GM12878 (cell line): ENCODE measurements at regions of chr2 and their contacts with region 1.

Region 1: GRCh38 chr2:177489719-177490301 is 97.2 kb downstream of the AGPS start:
- DNase-seq: no peak
- ATAC-seq: no peak
- H3K4me3 ChIP-seq: no peak overlapping the region
- H3K27ac ChIP-seq: no peak overlapping the region
- H3K4me1 ChIP-seq: no peaks in the 10 kb centered on the region
- H3K27me3 ChIP-seq: no peaks in the 10 kb centered on the region
- CTCF ChIP-seq: peak; percentile 37 to 49 (median 39); a peak in 5 of 6 replicates
- EP300 ChIP-seq: no peak
- POLR2A ChIP-seq: no peak
- RAD21 ChIP-seq: peak; percentile 65

Region 2: GRCh38 chr2:177056481-177056929 is 433.3 kb before region 1 on chr2:
- CTCF ChIA-PET with region 1: no interaction called
- POLR2A ChIA-PET with region 1: no interaction called
- RAD21 ChIA-PET with region 1: no interaction called
- SMC1A ChIA-PET with region 1: no interaction called
- in situ Hi-C with region 1: no loop called
- intact Hi-C with region 1: no loop called
- DNase-seq: no peak
- ATAC-seq: peak; percentile 61; the same call in 2 of the 3 replicates
- H3K4me3 ChIP-seq: no peak overlapping the region
- H3K27ac ChIP-seq: no peak overlapping the region
- H3K4me1 ChIP-seq: no peaks in the 10 kb centered on the region
- H3K27me3 ChIP-seq: no peaks in the 10 kb centered on the region
- CTCF ChIP-seq: peak in 1 of 3 experiments; percentile 3; a peak in 2 of 6 replicates
- EP300 ChIP-seq: no peak
- POLR2A ChIP-seq: no peak
- RAD21 ChIP-seq: 0 out of 2 replicates have a peak, but pooled peaks have one; percentile 14

Region 3: DNA sequence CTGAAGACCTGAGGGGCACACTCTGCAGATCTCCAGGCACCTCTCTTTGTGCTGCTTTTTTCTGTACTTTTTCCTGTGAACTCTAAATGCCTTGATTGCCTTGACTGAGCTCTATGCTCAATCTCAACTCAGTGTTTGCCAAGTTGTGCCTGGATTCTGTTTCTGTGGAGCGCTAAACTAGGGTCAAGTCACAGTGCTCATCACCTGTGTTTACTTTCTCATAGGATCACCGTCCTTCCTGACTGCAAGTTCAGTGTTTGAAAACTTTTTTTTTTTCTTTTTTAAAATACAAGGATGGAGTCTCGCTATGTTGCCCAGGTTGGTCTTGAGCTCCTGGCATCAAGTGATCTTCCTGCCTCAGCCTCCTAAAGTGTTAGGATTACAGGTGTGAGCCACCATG is 34.6 kb before region 1 on chr2:
- CTCF ChIA-PET with region 1: no interaction called
- POLR2A ChIA-PET with region 1: no interaction called
- RAD21 ChIA-PET with region 1: no interaction called
- SMC1A ChIA-PET with region 1: no interaction called
- in situ Hi-C with region 1: no loop called
- intact Hi-C with region 1: no loop called
- DNase-seq: no peak
- ATAC-seq: no peak
- H3K4me3 ChIP-seq: no peak overlapping the region
- H3K27ac ChIP-seq: no peak overlapping the region
- H3K4me1 ChIP-seq: no peaks in the 10 kb centered on the region
- H3K27me3 ChIP-seq: no peaks in the 10 kb centered on the region
- CTCF ChIP-seq: no peak
- EP300 ChIP-seq: no peak
- POLR2A ChIP-seq: no peak
- RAD21 ChIP-seq: no peak

Region 4: GRCh38 chr2:177506998-177507397 is 17.2 kb after region 1 on chr2:
- CTCF ChIA-PET with region 1: interaction called, 21 read pairs
- POLR2A ChIA-PET with region 1: no interaction called
- RAD21 ChIA-PET with region 1: interaction called, 3 read pairs
- SMC1A ChIA-PET with region 1: interaction called, 5 read pairs
- in situ Hi-C with region 1: no loop called
- intact Hi-C with region 1: no loop called
- DNase-seq: no peak
- ATAC-seq: no peak
- H3K4me3 ChIP-seq: no peak overlapping the region
- H3K27ac ChIP-seq: no peak overlapping the region
- H3K4me1 ChIP-seq: no peaks in the 10 kb centered on the region
- H3K27me3 ChIP-seq: no peaks in the 10 kb centered on the region
- CTCF ChIP-seq: no peak
- EP300 ChIP-seq: no peak
- POLR2A ChIP-seq: no peak
- RAD21 ChIP-seq: no peak

Region 5: DNA sequence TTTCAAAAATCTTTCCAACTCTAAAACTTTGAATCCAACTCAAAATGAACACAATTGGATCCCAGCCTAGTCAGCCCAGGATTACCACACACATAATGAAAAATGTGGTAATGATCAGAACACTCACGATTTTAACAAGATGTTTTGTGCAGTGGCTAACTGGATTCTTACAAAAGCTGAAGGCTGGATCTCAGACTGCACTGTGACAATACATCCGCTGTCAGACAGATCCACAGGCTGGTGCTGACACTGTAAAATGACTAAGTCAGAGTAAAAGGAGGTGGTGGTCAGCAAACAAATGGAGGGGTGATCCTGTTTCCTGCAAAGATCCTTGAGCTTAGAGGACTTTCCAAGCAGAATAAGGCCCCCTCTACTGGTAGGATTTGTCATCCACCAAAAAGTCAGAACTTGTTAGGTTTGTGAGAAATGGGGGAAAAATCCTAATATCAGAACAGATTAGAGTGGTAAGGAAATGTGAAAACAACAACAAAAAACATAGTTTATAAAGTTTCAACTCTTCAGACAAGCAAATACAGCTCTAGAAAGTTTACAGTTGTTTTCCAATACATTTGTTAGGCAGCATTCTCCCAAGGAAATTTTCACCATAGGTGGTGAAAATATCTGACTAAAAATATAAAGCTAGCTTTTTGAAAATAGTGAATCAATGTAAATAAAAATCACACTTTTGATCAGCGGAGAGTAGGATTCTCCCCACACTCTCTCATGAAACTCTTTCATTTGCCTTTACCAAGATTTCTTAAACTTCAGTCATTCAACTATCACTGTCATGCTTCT is 114.7 kb after region 1 on chr2:
- CTCF ChIA-PET with region 1: interaction called, 18 read pairs
- POLR2A ChIA-PET with region 1: no interaction called
- RAD21 ChIA-PET with region 1: interaction called, 12 read pairs
- SMC1A ChIA-PET with region 1: interaction called, 5 read pairs
- in situ Hi-C with region 1: no loop called
- intact Hi-C with region 1: loop called (anchors 1 kb)
- DNase-seq: no peak
- ATAC-seq: peak; percentile 58
- H3K4me3 ChIP-seq: no peak overlapping the region
- H3K27ac ChIP-seq: no peak overlapping the region
- H3K4me1 ChIP-seq: no peaks in the 10 kb centered on the region
- H3K27me3 ChIP-seq: no peaks in the 10 kb centered on the region
- CTCF ChIP-seq: peak; percentile 58 to 63 (median 59); a peak in 5 of 6 replicates
- EP300 ChIP-seq: no peak
- POLR2A ChIP-seq: no peak
- RAD21 ChIP-seq: peak; percentile 63